ENCODE measurements at regions of chr6 and their contacts with region 1.

Region 1: DNA sequence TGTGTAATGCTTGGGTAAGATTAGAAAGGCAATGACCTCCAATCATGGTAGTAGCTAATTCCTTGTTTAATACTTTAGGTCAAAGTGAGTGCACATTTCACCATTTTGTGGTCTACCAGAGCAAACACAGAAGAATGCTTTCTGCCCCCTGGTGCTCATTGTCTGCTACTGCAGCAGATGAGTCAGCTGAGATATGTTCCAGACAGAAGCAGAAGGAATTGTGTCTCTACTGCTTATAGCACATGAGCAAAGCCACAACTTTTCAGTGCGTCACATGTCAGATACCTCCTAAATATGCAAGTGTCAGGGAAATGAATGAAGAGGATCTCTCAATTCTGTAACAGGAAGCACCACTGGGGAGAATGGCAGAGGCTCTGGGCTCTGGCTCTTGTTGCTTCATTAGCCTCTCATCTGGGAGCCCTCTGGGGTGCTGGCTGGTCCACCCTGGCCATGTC is 308.9 kb downstream of the ALDH8A1 start:
- DNase-seq: peak; percentile 80
- ATAC-seq: peak; percentile 87
- H3K4me3 Mint-ChIP-seq: no peak overlapping the region
- H3K27ac Mint-ChIP-seq: no peak overlapping the region
- H3K4me1 Mint-ChIP-seq: peaks cover 12% of the 10 kb centered on the region
- H3K27me3 Mint-ChIP-seq: no peaks in the 10 kb centered on the region

Region 2: DNA sequence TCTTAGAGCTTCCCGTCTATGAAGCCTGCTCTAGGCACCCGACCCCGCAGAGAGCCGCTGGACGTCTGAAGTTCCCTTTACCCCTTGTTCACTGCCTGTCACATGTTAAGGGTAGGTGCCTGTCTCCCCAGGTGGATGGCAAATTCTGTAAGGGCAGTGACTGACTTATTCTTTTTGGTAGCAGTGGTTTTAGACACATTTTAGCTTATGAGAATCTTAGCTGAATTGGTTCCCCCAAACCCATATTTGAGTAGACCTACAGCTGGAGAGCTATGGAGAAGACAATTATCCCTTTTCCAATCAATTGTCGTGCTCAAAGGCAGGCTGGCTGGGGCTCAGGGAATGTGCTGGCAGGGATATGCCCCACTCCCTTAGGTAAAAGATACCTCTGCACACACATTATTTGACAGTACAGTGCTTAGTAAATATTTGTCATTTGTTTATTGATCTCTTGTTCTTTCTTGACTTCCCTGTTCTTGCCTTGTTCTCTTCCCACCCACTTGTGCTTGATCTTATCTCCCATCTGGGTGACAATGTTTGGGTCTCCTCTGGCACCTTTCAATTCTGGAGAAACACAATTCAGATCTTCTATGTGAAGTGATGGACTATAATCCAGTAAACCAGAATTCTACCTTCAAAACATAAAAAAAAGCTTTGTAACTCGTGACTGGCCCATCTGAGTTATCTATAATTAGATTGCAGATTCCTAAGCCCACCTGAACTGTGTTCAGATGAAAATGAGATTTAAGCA is 474.3 kb before region 1 on chr6:
- CTCF ChIA-PET with region 1: interaction called, 24 read pairs
- POLR2A ChIA-PET with region 1: no interaction called
- DNase-seq: no peak
- ATAC-seq: no peak
- H3K4me3 Mint-ChIP-seq: no peak overlapping the region
- H3K27ac Mint-ChIP-seq: no peak overlapping the region
- H3K4me1 Mint-ChIP-seq: peaks cover 15% of the 10 kb centered on the region
- H3K27me3 Mint-ChIP-seq: no peaks in the 10 kb centered on the region

Region 3: GRCh38 chr6:134190883-134191282 is 450.1 kb before region 1 on chr6:
- CTCF ChIA-PET with region 1: interaction called, 16 read pairs
- POLR2A ChIA-PET with region 1: no interaction called
- DNase-seq: no peak
- ATAC-seq: no peak
- H3K4me3 Mint-ChIP-seq: no peak overlapping the region
- H3K27ac Mint-ChIP-seq: no peak overlapping the region
- H3K4me1 Mint-ChIP-seq: peaks cover 23% of the 10 kb centered on the region
- H3K27me3 Mint-ChIP-seq: no peaks in the 10 kb centered on the region

Region 4: GRCh38 chr6:134352786-134353480 is 288.1 kb before region 1 on chr6:
- CTCF ChIA-PET with region 1: interaction called, 15 read pairs
- POLR2A ChIA-PET with region 1: no interaction called
- DNase-seq: no peak
- ATAC-seq: no peak
- H3K4me3 Mint-ChIP-seq: no peak overlapping the region
- H3K27ac Mint-ChIP-seq: no peak overlapping the region
- H3K4me1 Mint-ChIP-seq: peaks cover 27% of the 10 kb centered on the region
- H3K27me3 Mint-ChIP-seq: no peaks in the 10 kb centered on the region

Region 5: GRCh38 chr6:134628154-134628553 is 12.8 kb before region 1 on chr6:
- CTCF ChIA-PET with region 1: interaction called, 17 read pairs
- POLR2A ChIA-PET with region 1: no interaction called
- DNase-seq: no peak
- ATAC-seq: no peak
- H3K4me3 Mint-ChIP-seq: no peak overlapping the region
- H3K27ac Mint-ChIP-seq: no peak overlapping the region
- H3K4me1 Mint-ChIP-seq: peaks cover 10% of the 10 kb centered on the region
- H3K27me3 Mint-ChIP-seq: peaks cover 17% of the 10 kb centered on the region

Measured in activated CD8-positive, alpha-beta T cell treated with anti-CD3 and anti-CD28 coated beads, Interleukin-2, amount 10 ng/mL, durations not matched to agents 7 days and 5 days (primary cell).